ENCODE measurements at regions of chr4 and their contacts with region 1.

Region 1: DNA sequence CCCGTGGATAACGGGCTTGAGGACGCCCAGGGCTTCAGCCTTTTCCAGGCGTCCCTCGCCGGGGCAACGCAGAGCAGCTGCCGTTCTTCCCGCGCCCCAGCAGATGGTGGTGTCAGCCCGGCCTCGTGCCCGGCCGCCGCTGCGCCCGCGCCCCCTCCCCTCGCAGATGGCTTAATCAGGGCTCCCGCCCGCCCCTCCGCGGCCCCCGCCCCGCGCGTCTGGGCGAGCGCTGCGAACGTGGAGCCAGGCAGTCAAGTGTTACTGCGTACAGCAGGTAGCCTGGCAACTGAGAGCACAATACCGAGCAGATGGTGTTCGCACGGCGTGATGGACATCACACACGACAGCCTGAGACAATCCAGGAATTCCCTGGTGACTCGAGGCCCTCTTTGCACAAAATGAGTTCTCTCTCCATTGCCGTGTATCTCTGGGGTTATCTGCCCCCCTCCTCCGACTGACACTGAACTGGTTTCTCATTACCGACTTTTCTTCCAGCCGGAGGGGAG is 69.3 kb downstream of the MGST2 start:
- DNase-seq: peak; percentile 94
- ATAC-seq: peak; percentile 95

Region 2: DNA sequence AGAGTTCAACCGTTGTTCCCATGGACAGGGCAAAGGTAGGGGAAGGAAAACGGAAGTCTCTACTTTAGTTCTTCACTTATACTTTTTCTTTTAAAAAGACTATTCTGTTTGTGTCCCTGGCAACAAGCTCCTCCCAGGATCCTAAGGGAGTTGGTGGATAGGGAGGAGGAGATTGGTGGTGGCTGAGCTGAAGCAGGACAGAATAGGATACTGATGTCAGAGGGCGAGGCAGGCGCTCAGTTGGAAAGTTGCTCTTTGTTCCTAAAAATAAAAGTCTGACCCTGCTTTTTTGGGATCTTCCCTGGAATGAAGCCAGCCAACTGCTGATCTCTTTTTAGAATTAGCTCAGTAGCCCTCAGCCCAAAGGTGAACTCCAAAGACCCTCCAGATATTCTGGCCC is 35.4 kb after region 1 on chr4:
- intact Hi-C with region 1: loop called (anchors 2 kb)
- DNase-seq: peak; percentile 69
- ATAC-seq: peak; percentile 83

Region 3: GRCh38 chr4:139919521-139919920 is 184.6 kb after region 1 on chr4:
- intact Hi-C with region 1: loop called (anchors 5 kb)
- DNase-seq: no peak
- ATAC-seq: peak; percentile 76

Region 4: DNA sequence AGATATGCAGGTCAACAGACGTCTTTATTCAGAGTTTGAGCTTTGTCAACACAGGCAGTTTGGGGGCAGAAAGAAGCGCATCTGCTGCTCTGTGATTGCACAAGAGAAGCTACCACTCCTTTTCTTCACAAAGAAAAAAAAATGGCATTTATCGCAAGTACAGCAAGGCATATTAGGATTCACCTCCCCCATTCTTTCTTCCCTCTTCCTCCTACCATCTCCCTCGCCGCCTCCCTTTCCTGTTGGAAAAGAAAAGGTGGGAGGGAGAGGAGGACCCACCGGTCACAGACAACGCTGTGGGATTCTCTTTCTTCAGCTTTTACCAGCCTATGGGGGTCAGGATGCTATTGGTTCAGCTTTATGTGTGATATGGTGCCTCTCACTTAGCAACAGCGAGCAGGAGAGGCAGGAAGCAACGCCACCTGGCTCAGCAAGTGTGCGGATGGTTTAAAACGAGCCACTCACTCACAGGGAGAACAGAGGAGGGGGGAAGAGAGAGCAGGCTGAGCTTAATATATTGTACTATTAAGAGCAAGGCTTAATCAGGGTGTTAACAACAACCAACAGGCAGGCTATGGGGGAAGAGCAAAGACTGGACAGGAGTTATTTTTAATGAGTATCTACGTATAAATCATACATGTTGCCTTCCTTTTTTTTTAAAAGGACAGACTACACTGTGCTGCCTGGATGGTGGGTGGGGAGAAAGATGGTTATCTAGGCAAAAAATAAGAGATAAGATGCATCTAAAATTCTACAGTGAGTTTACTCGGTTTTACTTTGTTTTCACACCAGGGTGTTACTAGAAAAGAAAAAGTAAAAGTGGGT is 314.3 kb after region 1 on chr4:
- intact Hi-C with region 1: loop called (anchors 5 kb)
- DNase-seq: peak; percentile 71
- ATAC-seq: peak; percentile 67

Region 5: DNA sequence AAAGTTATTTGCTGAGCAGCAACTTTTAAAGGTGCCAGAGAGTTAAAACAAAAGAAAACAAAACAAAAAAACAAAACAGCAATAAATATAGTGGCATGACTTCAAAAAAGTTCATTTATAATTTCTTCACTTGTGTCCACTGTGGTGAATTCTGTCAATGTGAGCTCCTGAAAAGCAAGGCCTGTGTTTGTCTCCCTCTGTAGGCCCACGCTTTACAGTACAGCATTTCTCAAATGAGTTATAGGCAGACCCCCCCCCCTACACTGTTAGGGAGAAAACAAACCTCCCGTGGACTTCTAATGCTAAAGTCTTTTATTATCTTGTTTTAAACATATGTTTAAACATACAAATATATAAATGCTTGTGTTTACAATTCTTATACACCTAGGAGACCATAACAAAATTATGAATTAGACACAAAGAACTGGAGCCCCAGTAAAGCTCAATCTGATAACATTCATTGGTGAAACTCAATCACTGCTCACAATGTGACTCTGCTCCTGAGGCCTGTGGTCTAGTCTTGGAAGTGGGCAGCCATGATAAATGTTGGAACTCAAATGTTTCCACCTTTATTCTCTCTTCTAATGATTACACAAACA is 591.6 kb after region 1 on chr4:
- intact Hi-C with region 1: loop called (anchors 2 kb)
- DNase-seq: no peak
- ATAC-seq: peak; percentile 67

Measured in Right ventricle myocardium inferior (tissue), 1 donor.